Heart right ventricle (tissue), 16 donors: ENCODE measurements at regions of chr1 and their contacts with region 1.

Region 1: GRCh38 chr1:148334339-148335130 is 148.6 kb downstream of the PPIAL4G start:
- DNase-seq: peak; percentile 68 to 86
- ATAC-seq: peak; percentile 92 to 98 (median 96)
- H3K4me3 ChIP-seq: peak overlapping the region; percentile 32 to 76 (median 54)
- H3K27ac ChIP-seq: peak overlapping the region in 8 of 10 donors; percentile 22 to 94 (median 78)
- H3K4me1 ChIP-seq: peaks cover 0 to 30% (median 14%) of the 10 kb centered on the region in 9 donors
- H3K27me3 ChIP-seq: peaks cover 0 to 43% (median 22%) of the 10 kb centered on the region in 7 donors
- CTCF ChIP-seq: no peak

Region 2: GRCh38 chr1:147912553-147912952 is 422.0 kb before region 1 on chr1:
- intact Hi-C with region 1: no loop called
- DNase-seq: no peak
- ATAC-seq: no peak
- H3K4me3 ChIP-seq: no peak overlapping the region
- H3K27ac ChIP-seq: no peak overlapping the region
- H3K4me1 ChIP-seq: no peaks in the 10 kb centered on the region
- H3K27me3 ChIP-seq: peaks cover 0 to 30% (median 3%) of the 10 kb centered on the region in 7 donors
- CTCF ChIP-seq: no peak

Region 3: DNA sequence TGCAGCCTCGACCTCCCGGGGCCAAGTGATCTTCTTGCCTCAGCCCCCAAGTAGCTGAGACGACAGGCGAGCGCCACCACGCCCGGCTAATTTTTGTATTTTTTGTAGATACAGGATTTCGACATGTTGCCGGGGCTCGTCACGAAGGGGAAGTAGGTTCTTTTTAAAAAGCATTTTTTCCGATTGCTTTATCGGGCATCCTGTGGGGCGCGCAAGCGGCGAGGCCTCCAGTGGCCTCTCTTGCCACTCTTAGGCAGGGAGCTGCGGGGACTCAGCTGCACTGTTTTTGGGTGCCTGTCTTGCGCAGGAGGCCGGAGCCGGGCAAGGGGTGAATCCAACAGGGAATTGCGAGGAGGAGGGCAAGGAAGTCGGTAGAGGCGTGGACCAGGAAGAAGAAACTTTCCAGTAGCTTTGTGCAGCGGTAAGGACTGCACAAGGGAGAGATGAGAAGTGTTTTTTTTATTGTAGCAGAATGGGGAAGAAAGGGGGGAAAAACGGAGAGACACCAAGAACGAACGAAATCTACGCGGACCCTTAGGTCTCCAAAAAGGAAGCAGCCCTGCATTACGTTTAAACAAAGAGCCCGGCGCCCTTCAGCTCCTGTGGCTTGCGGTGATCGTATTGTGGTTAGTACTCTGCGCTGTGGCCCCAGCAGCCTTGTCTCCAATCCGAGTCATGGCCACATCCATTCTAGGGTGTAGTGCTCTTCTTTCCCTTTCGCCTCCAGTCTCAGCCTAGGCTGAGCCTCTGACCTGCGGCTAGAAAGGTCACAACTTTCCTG is 16.2 kb before region 1 on chr1:
- intact Hi-C with region 1: no loop called
- DNase-seq: peak in 1 of 2 donors; percentile 23
- ATAC-seq: peak in 6 of 8 donors; percentile 46 to 76 (median 50)
- H3K4me3 ChIP-seq: peak overlapping the region in 9 of 10 donors; percentile 1 to 51 (median 34)
- H3K27ac ChIP-seq: peak overlapping the region in 1 of 10 donors; percentile 81
- H3K4me1 ChIP-seq: peaks cover 0 to 26% (median 12%) of the 10 kb centered on the region in 9 donors
- H3K27me3 ChIP-seq: peaks cover 4 to 79% (median 60%) of the 10 kb centered on the region in 7 donors
- CTCF ChIP-seq: no peak

Region 4: GRCh38 chr1:148388260-148389027 is 53.9 kb after region 1 on chr1:
- intact Hi-C with region 1: loop called in 1 of 10 experiments (anchors 10 kb)
- DNase-seq: peak; percentile 81 to 89
- ATAC-seq: peak; percentile 90 to 97 (median 94)
- H3K4me3 ChIP-seq: peak overlapping the region; percentile 26 to 65 (median 54)
- H3K27ac ChIP-seq: peak overlapping the region in 9 of 10 donors; percentile 5 to 91 (median 71)
- H3K4me1 ChIP-seq: peaks cover 0 to 23% (median 0%) of the 10 kb centered on the region in 9 donors
- H3K27me3 ChIP-seq: peaks cover 0 to 12% (median 0%) of the 10 kb centered on the region in 7 donors
- CTCF ChIP-seq: no peak